PC-3 (cell line): ENCODE measurements at regions of chr1 and their contacts with region 1.

Region 1: GRCh38 chr1:43934101-43934985 is 742 bp downstream of the ARTN start:
- DNase-seq: peak; percentile 75
- ATAC-seq: peak; percentile 53
- H3K4me3 ChIP-seq: peak overlapping the region; percentile 68
- H3K27ac ChIP-seq: peak overlapping the region; percentile 55
- H3K4me1 ChIP-seq: peaks cover 56% of the 10 kb centered on the region
- H3K27me3 ChIP-seq: no peaks in the 10 kb centered on the region
- CTCF ChIP-seq: peak; percentile 67

Region 2: GRCh38 chr1:43405219-43405875 is 529.0 kb before region 1 on chr1:
- CTCF ChIA-PET with region 1: no interaction called
- POLR2A ChIA-PET with region 1: no interaction called
- intact Hi-C with region 1: no loop called
- DNase-seq: no peak
- ATAC-seq: no peak
- H3K4me3 ChIP-seq: no peak overlapping the region
- H3K27ac ChIP-seq: no peak overlapping the region
- H3K4me1 ChIP-seq: no peaks in the 10 kb centered on the region
- H3K27me3 ChIP-seq: no peaks in the 10 kb centered on the region
- CTCF ChIP-seq: no peak

Region 3: GRCh38 chr1:43763497-43763973 is 170.8 kb before region 1 on chr1:
- CTCF ChIA-PET with region 1: interaction called, 83 read pairs
- POLR2A ChIA-PET with region 1: interaction called, 4 read pairs
- intact Hi-C with region 1: loop called (anchors 1 kb)
- DNase-seq: peak; percentile 93
- ATAC-seq: peak; percentile 99
- H3K4me3 ChIP-seq: no peak overlapping the region
- H3K27ac ChIP-seq: no peak overlapping the region
- H3K4me1 ChIP-seq: peaks cover 8% of the 10 kb centered on the region; the same call in 1 of the 2 replicates
- H3K27me3 ChIP-seq: no peaks in the 10 kb centered on the region
- CTCF ChIP-seq: peak; percentile 95

Region 4: DNA sequence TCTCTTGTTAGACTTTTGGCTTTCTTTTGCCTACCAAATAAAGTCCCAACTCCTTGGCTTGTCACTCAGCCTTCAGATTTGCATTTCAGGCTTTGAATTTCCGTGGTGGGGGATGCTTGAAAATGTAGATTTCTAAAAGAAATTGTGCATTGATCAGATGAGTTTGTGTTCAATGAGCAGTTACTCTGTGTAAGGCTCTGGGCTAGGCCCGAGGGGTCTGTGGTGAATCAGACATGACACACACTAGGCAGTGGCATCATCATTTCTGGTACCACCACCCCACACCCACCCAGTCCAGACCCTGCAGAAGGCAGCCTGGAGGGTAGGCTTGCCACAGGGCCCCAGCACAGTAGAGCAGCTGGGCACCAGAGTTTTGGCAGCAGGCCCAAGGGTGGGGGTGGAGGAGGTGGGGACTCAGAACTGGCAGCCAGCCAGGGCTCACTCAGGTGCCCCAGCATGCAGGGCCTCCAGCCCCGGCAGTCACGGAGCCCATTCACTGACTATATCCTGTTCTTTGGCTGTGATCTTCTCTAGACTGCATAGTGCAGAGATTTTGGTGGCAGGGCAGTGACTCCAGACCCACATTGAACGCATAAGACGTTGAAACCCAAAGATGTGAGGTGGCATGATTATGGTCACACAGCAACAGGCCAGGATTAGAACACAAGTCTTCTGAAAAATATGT is 97.9 kb before region 1 on chr1:
- CTCF ChIA-PET with region 1: no interaction called
- POLR2A ChIA-PET with region 1: no interaction called
- intact Hi-C with region 1: loop called (anchors 5 kb)
- DNase-seq: peak; percentile 90
- ATAC-seq: peak; percentile 20
- H3K4me3 ChIP-seq: no peak overlapping the region
- H3K27ac ChIP-seq: peak overlapping the region; percentile 97
- H3K4me1 ChIP-seq: peaks cover 58% of the 10 kb centered on the region
- H3K27me3 ChIP-seq: no peaks in the 10 kb centered on the region
- CTCF ChIP-seq: no peak

Region 5: DNA sequence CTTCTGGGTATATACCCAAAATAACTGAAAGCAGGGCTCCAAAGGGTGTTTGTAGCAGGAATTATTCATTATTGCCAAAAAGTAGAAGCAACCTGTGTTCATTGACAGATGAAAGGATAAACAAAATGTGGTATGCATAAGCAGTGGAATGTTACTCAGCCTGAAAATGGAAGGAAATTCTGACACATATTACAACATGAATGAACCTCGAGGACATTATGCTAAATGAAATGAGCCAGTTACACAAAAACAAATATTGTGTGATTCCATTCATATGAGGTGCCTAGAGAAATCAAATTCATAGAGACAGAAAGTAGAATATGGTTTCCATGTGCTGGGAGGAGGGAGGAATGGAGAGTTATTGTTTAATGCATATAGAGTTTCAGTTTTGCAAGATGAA is 87.1 kb before region 1 on chr1:
- CTCF ChIA-PET with region 1: interaction called, 4 read pairs
- POLR2A ChIA-PET with region 1: no interaction called
- intact Hi-C with region 1: loop called (anchors 5 kb)
- DNase-seq: peak; percentile 35
- ATAC-seq: peak; percentile 64
- H3K4me3 ChIP-seq: peak overlapping the region; percentile 48
- H3K27ac ChIP-seq: peak overlapping the region; percentile 37
- H3K4me1 ChIP-seq: peaks cover 18% of the 10 kb centered on the region
- H3K27me3 ChIP-seq: no peaks in the 10 kb centered on the region
- CTCF ChIP-seq: no peak

Region 6: GRCh38 chr1:44251989-44252671 is 317.8 kb after region 1 on chr1:
- CTCF ChIA-PET with region 1: no interaction called
- POLR2A ChIA-PET with region 1: no interaction called
- intact Hi-C with region 1: no loop called
- DNase-seq: no peak
- ATAC-seq: no peak
- H3K4me3 ChIP-seq: no peak overlapping the region
- H3K27ac ChIP-seq: no peak overlapping the region
- H3K4me1 ChIP-seq: no peaks in the 10 kb centered on the region
- H3K27me3 ChIP-seq: no peaks in the 10 kb centered on the region
- CTCF ChIP-seq: no peak